ENCODE measurements at regions of chr3 and their contacts with region 1.

Region 1: GRCh38 chr3:171018156-171018935 is 8.2 kb downstream of the SLC2A2 start:
- DNase-seq: peak; percentile 43
- ATAC-seq: peak; percentile 73
- H3K4me3 Mint-ChIP-seq: no peak overlapping the region
- H3K27ac Mint-ChIP-seq: no peak overlapping the region
- H3K4me1 Mint-ChIP-seq: no peaks in the 10 kb centered on the region
- H3K27me3 Mint-ChIP-seq: no peaks in the 10 kb centered on the region
- CTCF ChIP-seq: 0 out of 2 replicates have a peak, but pooled peaks have one; percentile 23

Region 2: DNA sequence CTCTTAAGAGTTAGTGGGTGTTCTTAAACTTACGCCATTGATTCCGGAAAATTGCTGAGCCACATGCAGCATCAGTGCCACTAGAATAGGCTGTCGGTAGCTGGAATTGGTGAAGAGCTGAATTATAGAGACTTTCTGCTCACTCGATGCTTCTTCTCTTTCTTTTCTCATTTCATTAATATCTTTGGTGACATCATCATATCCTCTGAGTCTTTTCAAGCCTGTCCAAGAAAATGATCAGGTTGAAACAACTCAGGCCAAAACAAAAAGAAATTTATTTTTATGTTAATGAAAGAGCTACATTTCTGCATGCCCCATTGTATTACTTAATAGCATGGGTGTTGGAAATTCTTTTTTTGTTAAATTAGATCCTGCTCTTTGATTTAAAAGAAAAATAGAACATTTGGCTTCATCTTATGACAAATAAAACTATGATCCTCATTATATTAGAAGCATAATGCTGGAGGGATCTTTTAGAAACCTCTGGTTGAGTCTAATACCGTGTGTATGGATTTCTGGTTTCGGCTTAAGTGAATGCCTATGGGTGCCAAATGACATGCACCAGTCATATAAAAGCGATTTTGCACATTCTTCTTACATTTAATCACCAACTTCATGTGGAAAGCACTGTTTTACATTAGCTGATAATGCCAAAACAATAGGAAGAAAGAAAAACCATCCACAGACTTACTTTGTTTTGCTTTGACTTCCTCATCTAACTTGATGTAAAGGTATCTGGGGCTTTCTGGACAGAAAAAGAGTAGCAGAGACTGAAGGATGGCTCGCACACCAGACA is 12.9 kb before region 1 on chr3:
- CTCF ChIA-PET with region 1: interaction called, 10 read pairs
- POLR2A ChIA-PET with region 1: no interaction called
- DNase-seq: no peak
- ATAC-seq: no peak
- H3K4me3 Mint-ChIP-seq: no peak overlapping the region
- H3K27ac Mint-ChIP-seq: no peak overlapping the region
- H3K4me1 Mint-ChIP-seq: no peaks in the 10 kb centered on the region
- H3K27me3 Mint-ChIP-seq: no peaks in the 10 kb centered on the region
- CTCF ChIP-seq: no peak

Region 3: DNA sequence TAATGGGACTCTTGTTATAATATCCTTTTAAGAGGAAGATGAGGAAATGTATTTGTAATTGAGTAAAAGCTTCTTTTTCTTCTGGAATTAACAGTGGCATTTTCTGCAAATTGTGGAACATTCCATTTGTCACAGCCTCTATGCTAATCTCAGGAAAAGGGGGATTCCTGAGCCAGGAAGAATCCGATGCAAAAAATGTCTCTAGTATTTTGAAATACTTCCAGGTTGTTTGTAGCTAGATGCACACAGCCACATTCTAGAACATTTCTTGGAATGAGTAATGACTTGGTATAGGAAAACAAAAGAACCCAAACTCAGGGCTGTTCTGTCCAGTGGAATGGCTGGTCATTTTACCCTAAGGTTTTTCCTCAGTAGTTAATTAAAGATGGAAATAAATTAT is 106.7 kb after region 1 on chr3:
- CTCF ChIA-PET with region 1: no interaction called
- POLR2A ChIA-PET with region 1: no interaction called
- DNase-seq: no peak
- ATAC-seq: no peak
- H3K4me3 Mint-ChIP-seq: no peak overlapping the region
- H3K27ac Mint-ChIP-seq: no peak overlapping the region
- H3K4me1 Mint-ChIP-seq: no peaks in the 10 kb centered on the region
- H3K27me3 Mint-ChIP-seq: no peaks in the 10 kb centered on the region
- CTCF ChIP-seq: no peak